Activated naive CD4-positive, alpha-beta T cell treated with anti-CD3 and anti-CD28 coated beads for 36 hours (primary cell): ENCODE measurements at regions of chr1 and their contacts with region 1.

Region 1: GRCh38 chr1:72466376-72466775 is 184.0 kb upstream of the NEGR1 start:
- DNase-seq: no peak
- H3K4me3 Mint-ChIP-seq: no peak overlapping the region
- H3K27ac Mint-ChIP-seq: no peak overlapping the region
- H3K4me1 Mint-ChIP-seq: no peaks in the 10 kb centered on the region
- H3K27me3 Mint-ChIP-seq: no peaks in the 10 kb centered on the region

Region 2: GRCh38 chr1:71780681-71781080 is 685.7 kb before region 1 on chr1:
- CTCF ChIA-PET with region 1: no interaction called
- intact Hi-C with region 1: loop called (anchors 5 kb)
- DNase-seq: no peak
- H3K4me3 Mint-ChIP-seq: no peak overlapping the region
- H3K27ac Mint-ChIP-seq: no peak overlapping the region
- H3K4me1 Mint-ChIP-seq: no peaks in the 10 kb centered on the region
- H3K27me3 Mint-ChIP-seq: no peaks in the 10 kb centered on the region

Region 3: DNA sequence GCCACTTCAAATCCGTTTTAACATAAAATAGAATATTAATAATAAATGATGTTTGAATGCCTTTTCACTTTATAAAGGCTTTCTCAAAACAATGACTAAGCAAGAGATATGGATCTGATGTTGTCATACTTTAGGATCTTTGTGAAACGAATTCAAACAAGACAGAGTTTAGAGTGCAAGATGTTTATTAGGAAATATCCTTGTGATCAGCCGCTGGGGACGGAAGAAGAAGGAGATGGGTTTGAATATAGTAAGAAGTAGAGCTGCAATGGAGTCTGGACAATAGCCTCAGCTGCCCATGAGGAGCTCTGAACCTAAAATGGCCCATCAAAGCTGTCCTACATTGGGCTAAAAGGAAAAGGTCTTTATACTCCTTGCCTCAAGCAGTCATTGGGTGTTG is 535.8 kb before region 1 on chr1:
- CTCF ChIA-PET with region 1: no interaction called
- intact Hi-C with region 1: no loop called
- DNase-seq: no peak
- H3K4me3 Mint-ChIP-seq: no peak overlapping the region
- H3K27ac Mint-ChIP-seq: no peak overlapping the region
- H3K4me1 Mint-ChIP-seq: no peaks in the 10 kb centered on the region
- H3K27me3 Mint-ChIP-seq: no peaks in the 10 kb centered on the region

Region 4: DNA sequence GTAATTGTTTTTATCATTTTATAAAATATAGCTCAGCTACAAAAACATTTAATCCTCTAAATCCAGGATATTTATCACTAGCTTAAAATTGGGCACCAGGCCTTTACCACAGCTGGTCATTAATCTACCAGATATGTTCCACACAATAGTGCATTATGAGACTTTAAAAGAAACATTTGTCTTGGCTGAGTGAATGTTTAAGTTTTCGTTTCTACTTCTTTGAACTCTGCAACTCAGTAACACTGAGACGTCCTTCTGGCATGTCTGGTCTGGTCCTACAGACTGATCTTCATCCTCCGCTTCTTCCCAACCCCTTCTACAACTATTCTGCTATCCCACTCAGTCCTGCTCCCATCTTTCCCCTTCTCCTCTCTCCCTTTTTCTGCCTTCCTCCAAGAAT is 480.2 kb before region 1 on chr1:
- CTCF ChIA-PET with region 1: no interaction called
- intact Hi-C with region 1: no loop called
- DNase-seq: no peak
- H3K4me3 Mint-ChIP-seq: no peak overlapping the region
- H3K27ac Mint-ChIP-seq: no peak overlapping the region
- H3K4me1 Mint-ChIP-seq: no peaks in the 10 kb centered on the region
- H3K27me3 Mint-ChIP-seq: no peaks in the 10 kb centered on the region